Esophagus squamous epithelium (tissue), 5 donors: ENCODE measurements at regions of chr1 and their contacts with region 1.

Region 1: DNA sequence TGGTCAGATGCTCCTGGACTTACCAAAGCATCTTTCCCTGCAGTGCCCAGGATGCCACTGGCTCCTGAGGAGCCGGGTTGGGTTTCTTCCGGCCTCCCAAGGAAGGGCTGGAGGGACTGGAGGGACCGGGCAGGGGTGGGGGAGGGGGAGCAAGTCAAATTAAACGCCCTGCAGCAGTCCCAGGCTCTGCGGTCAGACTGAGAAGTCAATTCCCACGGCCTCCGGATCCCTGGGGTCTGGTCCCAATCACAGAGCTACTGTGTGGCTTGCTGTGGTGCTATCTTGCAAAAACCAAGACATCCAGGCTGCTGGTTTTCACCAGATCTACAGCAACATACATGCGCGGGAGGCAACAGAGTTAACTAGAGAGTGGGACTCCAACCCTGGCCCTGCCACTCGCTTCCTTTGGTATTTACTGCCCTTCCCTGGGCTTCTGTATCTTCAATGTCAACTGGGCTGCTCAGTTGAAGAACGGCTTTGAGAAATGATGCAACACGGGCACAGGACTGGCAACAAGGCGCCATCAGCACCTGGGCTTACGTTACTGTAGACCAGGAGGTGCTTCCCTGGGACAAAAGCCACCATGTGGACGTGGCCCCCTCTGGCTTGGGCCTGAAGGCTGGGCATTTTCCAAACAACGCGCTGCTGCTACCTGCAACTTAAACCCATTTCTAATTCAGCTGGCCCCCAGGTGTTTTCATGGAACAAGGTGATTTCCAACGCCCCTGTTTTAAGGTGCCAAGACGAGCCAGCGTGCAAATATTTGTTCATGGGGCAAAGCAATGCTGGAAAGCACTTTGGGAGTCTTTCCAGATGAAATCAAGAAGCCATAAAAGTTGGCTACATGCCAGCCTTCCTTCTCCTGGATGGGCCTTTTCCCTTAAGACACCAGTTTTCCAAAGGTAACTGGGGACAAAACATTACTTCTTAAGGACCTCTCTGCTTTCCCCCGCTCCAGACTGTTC is 11.5 kb downstream of the RCC2 start:
- DNase-seq: no peak
- H3K4me3 ChIP-seq: no peak overlapping the region
- H3K27ac ChIP-seq: peak overlapping the region in 1 of 4 donors; percentile 26
- H3K4me1 ChIP-seq: peaks cover 0 to 71% (median 6%) of the 10 kb centered on the region in 3 donors
- H3K27me3 ChIP-seq: no peaks in the 10 kb centered on the region
- CTCF ChIP-seq: no peak
- POLR2A ChIP-seq: no peak

Region 2: DNA sequence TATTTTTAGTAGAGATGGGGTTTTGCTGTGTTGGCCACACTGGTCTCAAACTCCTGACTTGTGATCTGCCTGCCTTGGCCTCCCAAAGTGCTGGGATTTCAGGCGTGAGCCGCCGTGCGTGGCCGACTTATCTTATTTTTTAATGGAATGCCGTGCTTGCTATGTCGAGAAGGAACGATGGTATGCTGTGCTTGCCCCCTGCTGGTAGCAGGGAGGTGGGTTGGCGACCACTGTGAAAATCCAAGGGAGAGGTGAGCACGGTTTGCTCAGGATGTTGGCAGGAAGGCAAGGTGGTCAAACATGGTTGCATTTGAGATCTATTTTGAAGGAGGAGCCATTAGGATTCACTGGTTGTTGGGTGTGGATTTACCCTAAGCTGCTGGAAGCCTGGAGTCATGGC is 57.3 kb after region 1 on chr1:
- intact Hi-C with region 1: loop called (anchors 5 kb)
- DNase-seq: no peak
- H3K4me3 ChIP-seq: no peak overlapping the region
- H3K27ac ChIP-seq: no peak overlapping the region
- H3K4me1 ChIP-seq: peaks cover 0 to 16% (median 0%) of the 10 kb centered on the region in 3 donors
- H3K27me3 ChIP-seq: peaks cover 0 to 8% (median 0%) of the 10 kb centered on the region in 4 donors
- CTCF ChIP-seq: peak in 5 of 6 experiments; percentile 25 to 62 (median 49)
- POLR2A ChIP-seq: no peak